Posterior vena cava (tissue), 2 donors: ENCODE measurements at regions of chr5 and their contacts with region 1.

Region 1: DNA sequence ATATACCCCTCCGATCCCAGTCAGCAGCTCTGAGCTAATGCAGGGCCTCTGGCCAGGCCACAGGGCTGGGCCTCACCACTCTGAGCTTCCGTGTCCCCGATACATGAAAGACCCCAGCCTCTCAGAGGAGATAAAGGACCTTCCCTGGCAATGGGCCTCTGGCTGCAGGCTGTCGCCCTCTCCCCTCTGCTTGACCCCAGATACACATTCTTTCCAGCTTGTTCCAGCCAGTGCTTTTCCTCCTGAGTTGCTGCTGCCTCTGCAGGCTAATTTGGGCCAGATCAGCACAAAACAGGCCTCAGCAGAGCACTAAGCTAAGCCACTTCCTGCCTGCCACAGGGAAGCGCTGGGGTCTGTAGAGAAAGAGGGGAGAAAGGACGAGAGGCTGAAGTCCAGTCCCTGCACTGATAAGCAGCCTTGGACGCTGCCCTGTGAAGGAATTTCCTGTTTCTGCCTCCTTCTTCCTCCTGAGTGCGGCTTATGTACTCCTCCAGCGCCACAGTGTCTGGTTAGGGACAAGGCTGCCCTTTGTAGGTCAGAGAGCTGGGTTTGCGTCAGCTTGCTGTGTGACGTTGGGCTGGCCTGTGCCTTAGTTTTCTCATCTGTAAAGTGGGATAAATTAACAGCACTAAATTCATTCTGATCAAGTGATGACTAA is 73.0 kb upstream of the IL17B start:
- DNase-seq: peak; percentile 88

Region 2: GRCh38 chr5:148641735-148642134 is 810.4 kb before region 1 on chr5:
- intact Hi-C with region 1: no loop called
- DNase-seq: no peak

Region 3: DNA sequence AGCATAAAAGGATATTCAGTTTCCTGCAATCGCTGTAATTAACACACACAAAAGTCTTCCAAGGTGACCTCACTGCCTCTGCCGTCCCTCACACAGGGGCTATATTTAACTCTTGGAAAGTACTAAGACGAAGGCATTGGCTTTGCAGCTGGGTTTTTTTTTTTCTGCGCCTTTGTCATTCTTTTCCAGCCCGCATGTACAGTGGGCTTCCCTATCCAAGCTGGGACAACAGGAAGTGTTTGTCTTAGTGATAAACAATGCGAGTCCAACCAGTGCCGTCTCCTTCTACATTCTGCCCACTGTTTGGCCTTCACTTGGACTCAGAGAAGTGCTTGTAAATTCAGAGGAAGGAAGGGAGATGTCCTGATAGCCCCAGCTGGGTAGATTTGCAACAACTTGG is 162.8 kb before region 1 on chr5:
- intact Hi-C with region 1: no loop called
- DNase-seq: no peak

Region 4: GRCh38 chr5:149485655-149486425 is 33.7 kb after region 1 on chr5:
- intact Hi-C with region 1: loop called in 1 of 2 experiments (anchors 5 kb)
- DNase-seq: peak; percentile 89

Region 5: GRCh38 chr5:150189728-150190502 is 737.8 kb after region 1 on chr5 and contains the start of gene SLC6A7:
- intact Hi-C with region 1: no loop called
- DNase-seq: no peak
- total RNA-seq, gene SLC6A7: 0.14 to 0.19 TPM